CD14-positive monocyte (primary cell): ENCODE measurements at regions of chr7 and their contacts with region 1.

Region 1: GRCh38 chr7:139915864-139916716 is 87.0 kb downstream of the TBXAS1 start:
- DNase-seq: peak; percentile 84 to 95 (median 88)
- H3K4me3 ChIP-seq: no peak overlapping the region
- H3K4me3 Mint-ChIP-seq: no peak overlapping the region
- H3K27ac ChIP-seq: peak overlapping the region; percentile 50 to 80
- H3K27ac Mint-ChIP-seq: peak overlapping the region; percentile 71 to 94 (median 87)
- H3K4me1 ChIP-seq: peaks cover 18 to 23% of the 10 kb centered on the region in 2 donors
- H3K4me1 Mint-ChIP-seq: peaks cover 29% of the 10 kb centered on the region
- H3K27me3 ChIP-seq: no peaks in the 10 kb centered on the region
- H3K27me3 Mint-ChIP-seq: peaks cover 0 to 2% (median 0%) of the 10 kb centered on the region in 3 donors
- CTCF ChIP-seq: no peak

Region 2: GRCh38 chr7:139673230-139673629 is 242.9 kb before region 1 on chr7:
- intact Hi-C with region 1: loop called in 1 of 2 experiments (anchors 10 kb)
- DNase-seq: peak in 1 of 3 donors; percentile 17
- H3K4me3 ChIP-seq: no peak overlapping the region
- H3K4me3 Mint-ChIP-seq: no peak overlapping the region
- H3K27ac ChIP-seq: no peak overlapping the region
- H3K27ac Mint-ChIP-seq: peak overlapping the region in 4 of 7 donors; percentile 30 to 72 (median 54)
- H3K4me1 ChIP-seq: peaks cover 12 to 17% of the 10 kb centered on the region in 2 donors
- H3K4me1 Mint-ChIP-seq: peaks cover 17% of the 10 kb centered on the region
- H3K27me3 ChIP-seq: no peaks in the 10 kb centered on the region
- H3K27me3 Mint-ChIP-seq: peaks cover 0 to 4% (median 0%) of the 10 kb centered on the region in 3 donors
- CTCF ChIP-seq: no peak

Region 3: DNA sequence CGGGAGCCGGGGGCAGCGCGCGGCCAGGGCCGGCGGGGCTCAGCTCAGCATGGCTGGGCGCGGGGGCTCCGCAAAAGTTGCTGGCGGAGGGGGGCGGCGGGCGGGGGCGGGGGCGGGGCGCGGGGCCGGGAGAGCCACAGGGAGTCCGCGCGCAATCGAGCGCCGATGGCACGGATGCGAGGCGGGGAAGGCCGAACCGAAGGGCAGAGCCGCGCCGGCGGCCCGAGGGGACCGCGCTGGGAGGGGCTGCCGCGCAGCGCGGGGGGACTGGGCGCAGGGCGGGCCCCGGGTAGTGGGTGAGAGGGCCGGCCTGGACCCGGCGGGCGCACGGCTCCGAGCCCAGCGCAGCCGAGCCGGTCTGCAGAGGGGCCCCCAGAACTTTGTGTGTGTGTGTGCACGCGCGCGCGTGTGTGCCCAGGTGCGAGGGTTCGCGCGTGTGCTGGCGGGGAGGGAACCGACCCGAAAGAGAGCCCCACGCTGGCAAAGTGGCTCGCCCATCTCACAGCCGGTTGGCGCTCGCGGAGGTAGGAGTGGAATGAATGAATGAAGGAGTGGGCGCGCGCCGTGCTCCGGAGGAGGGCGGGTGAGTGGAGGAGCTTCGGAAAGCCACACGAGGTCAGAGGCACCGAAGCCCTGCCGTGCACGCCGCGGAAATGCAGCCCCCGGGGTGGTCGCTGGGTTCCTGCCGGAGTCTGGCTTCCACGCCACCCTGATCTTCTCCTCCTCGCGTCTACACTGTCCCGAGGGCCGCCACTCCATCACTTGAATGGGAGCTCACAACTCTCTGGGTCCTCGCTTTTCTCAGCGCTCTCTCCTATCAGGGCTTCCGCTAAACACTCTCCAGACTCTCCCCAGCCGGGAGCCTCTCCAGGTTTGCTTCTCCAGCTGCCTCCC is 137.9 kb before region 1 on chr7 and contains the start of gene HIPK2:
- intact Hi-C with region 1: loop called in 1 of 2 experiments (anchors 10 kb)
- DNase-seq: peak; percentile 32 to 46 (median 42)
- H3K4me3 ChIP-seq: peak within 1 kb of the TSS; percentile 77 to 90 (median 89)
- H3K4me3 Mint-ChIP-seq: peak within 1 kb of the TSS; percentile 99 to 100
- H3K27ac ChIP-seq: peak within 1 kb of the TSS; percentile 86 to 94
- H3K27ac Mint-ChIP-seq: peak within 1 kb of the TSS; percentile 90 to 99 (median 97)
- H3K4me1 ChIP-seq: peaks cover 30 to 38% of the 10 kb centered on the region in 2 donors
- H3K4me1 Mint-ChIP-seq: peaks cover 37% of the 10 kb centered on the region
- H3K27me3 ChIP-seq: peaks cover 12 to 15% of the 10 kb centered on the region in 2 donors
- H3K27me3 Mint-ChIP-seq: peaks cover 19 to 22% (median 21%) of the 10 kb centered on the region in 3 donors
- CTCF ChIP-seq: no peak
- polyA plus RNA-seq, gene HIPK2: 1.6 to 12.1 (median 3.0) TPM

Region 4: GRCh38 chr7:139901056-139901795 is 14.9 kb before region 1 on chr7:
- intact Hi-C with region 1: loop called in 1 of 2 experiments (anchors 2 kb)
- DNase-seq: peak; percentile 61 to 88 (median 86)
- H3K4me3 ChIP-seq: peak overlapping the region in 2 of 3 experiments; percentile 19 to 50
- H3K4me3 Mint-ChIP-seq: peak overlapping the region; percentile 54 to 60
- H3K27ac ChIP-seq: peak overlapping the region; percentile 97 to 99
- H3K27ac Mint-ChIP-seq: peak overlapping the region; percentile 90 to 97 (median 95)
- H3K4me1 ChIP-seq: peaks cover 63 to 68% of the 10 kb centered on the region in 2 donors
- H3K4me1 Mint-ChIP-seq: peaks cover 76% of the 10 kb centered on the region
- H3K27me3 ChIP-seq: no peaks in the 10 kb centered on the region
- H3K27me3 Mint-ChIP-seq: peaks cover 0 to 6% (median 0%) of the 10 kb centered on the region in 3 donors
- CTCF ChIP-seq: no peak